ENCODE measurements at regions of chr9 and their contacts with region 1.

Region 1: DNA sequence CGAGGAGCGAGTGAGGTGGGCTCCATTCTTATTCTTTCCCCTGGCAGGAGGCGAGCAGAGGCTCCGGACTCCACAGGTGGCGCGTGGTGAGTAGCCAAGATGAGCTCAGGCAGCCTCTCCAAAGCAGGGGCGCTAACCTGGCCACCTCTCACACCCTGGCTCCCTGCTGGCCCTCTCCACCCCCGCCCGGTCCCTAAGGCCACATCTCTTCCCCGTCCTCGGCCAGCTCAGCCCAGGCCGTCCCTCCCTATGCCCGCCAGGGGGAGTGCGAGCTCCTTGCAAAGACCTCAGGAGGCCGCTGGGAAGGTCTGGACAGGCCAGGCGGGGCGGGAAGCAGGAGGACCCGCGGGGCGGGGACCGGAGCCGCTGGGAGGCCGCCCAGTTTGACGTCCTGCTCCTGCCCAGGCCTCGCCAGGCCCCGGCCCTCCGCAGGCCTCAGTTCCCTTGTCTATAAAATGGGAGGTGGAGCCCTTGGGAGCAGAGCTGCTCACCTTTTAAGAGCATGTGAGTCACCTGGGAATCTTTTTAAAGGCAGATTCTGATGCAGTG is 46.3 kb upstream of the GGTA1 start:
- DNase-seq: no peak
- ATAC-seq: peak; percentile 99
- H3K4me3 ChIP-seq: no peak overlapping the region
- H3K27ac ChIP-seq: no peak overlapping the region
- H3K4me1 ChIP-seq: no peaks in the 10 kb centered on the region
- H3K27me3 ChIP-seq: no peaks in the 10 kb centered on the region
- CTCF ChIP-seq: peak; percentile 88 to 98 (median 89)
- EP300 ChIP-seq: no peak
- POLR2A ChIP-seq: no peak
- RAD21 ChIP-seq: peak; percentile 96

Region 2: GRCh38 chr9:121557581-121558447 is 11.9 kb after region 1 on chr9:
- CTCF ChIA-PET with region 1: interaction called, 13 read pairs
- POLR2A ChIA-PET with region 1: no interaction called
- RAD21 ChIA-PET with region 1: interaction called, 7 read pairs
- SMC1A ChIA-PET with region 1: interaction called, 3 read pairs
- in situ Hi-C with region 1: no loop called
- intact Hi-C with region 1: no loop called
- DNase-seq: peak; percentile 25
- ATAC-seq: peak; percentile 58
- H3K4me3 ChIP-seq: no peak overlapping the region
- H3K27ac ChIP-seq: no peak overlapping the region
- H3K4me1 ChIP-seq: peaks cover 20% of the 10 kb centered on the region
- H3K27me3 ChIP-seq: no peaks in the 10 kb centered on the region
- CTCF ChIP-seq: no peak
- EP300 ChIP-seq: no peak
- POLR2A ChIP-seq: no peak
- RAD21 ChIP-seq: no peak

Region 3: DNA sequence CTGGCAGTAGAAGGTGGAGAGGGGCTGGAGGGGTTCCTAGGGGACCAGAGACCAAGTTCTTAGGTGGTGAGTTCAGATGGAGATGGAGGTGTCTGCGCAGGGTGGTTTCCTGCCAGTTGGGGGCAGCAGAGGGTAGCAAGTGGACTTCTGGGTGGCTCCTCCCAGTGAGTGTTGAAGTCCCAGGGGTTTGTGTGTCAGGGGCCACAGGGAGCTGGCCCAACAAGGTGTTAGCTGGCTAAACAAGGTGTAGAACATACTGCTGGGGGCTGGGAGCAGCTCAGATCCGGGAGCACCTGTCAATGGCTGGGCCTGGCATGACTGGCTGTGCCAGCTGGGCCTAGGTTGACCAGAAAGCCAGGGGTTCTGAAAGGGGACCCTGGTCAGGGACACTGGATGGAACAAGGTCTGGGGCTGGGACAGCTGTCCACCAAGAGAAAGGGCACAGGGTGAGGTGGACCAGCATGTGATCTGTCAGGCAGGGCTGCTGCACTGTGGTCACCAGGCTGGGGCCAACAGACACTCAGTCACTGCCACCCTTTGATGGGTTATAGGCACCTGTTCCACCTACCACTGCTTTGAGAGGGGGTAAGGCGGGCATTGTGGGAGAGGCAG is 141.1 kb after region 1 on chr9:
- CTCF ChIA-PET with region 1: interaction called, 16 read pairs
- POLR2A ChIA-PET with region 1: no interaction called
- RAD21 ChIA-PET with region 1: interaction called, 6 read pairs
- SMC1A ChIA-PET with region 1: interaction called, 5 read pairs
- in situ Hi-C with region 1: loop called (anchors 5 kb)
- intact Hi-C with region 1: loop called (anchors 1 kb)
- DNase-seq: peak; percentile 8
- ATAC-seq: peak; percentile 96
- H3K4me3 ChIP-seq: no peak overlapping the region
- H3K27ac ChIP-seq: no peak overlapping the region
- H3K4me1 ChIP-seq: no peaks in the 10 kb centered on the region
- H3K27me3 ChIP-seq: no peaks in the 10 kb centered on the region; a peak in 1 of 4 replicates
- CTCF ChIP-seq: peak; percentile 87 to 89 (median 87)
- EP300 ChIP-seq: no peak
- POLR2A ChIP-seq: no peak
- RAD21 ChIP-seq: peak; percentile 87

Measured in GM12878 (cell line).